ENCODE measurements at regions of chr22 and their contacts with region 1.

Region 1: DNA sequence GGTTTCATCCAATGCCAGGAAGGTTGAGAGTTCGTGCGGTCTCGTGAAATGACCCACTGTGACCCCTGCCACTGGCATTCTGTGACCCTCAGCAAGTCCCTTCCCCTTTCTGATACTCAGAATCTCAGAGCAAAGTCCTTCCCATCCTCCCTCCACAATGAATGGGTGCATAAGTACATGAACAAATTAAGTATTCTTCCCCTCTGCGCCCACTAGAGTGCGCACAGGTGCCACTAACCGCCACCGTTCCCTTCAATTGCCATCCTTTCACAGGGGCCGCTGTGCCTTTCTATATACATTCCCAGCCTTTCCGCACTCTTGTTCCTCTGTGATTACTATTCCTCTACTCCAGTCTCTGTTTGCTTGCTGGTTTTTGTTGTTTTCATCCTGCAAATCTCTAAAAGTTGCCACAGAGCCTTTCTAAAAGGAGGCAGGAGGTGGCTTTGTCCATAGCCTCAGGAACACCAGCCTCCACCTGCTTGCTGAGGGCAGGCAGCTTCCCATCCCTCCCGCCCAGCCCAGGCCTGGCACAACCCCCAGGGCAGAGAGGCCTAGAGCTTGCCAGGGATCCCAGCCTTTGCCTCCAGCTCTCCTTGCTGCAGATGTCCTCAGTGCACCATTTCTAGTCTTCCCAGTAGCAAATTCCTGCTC is 6.7 kb upstream of the AP1B1 start:
- DNase-seq: peak; percentile 44 to 85 (median 57)
- ATAC-seq: peak; percentile 100
- H3K4me3 ChIP-seq: no peak overlapping the region
- H3K4me3 Mint-ChIP-seq: peak overlapping the region; percentile 18
- H3K27ac ChIP-seq: no peak overlapping the region
- H3K27ac Mint-ChIP-seq: no peak overlapping the region
- H3K4me1 ChIP-seq: peaks cover 3% of the 10 kb centered on the region
- H3K4me1 Mint-ChIP-seq: peaks cover 10% of the 10 kb centered on the region
- H3K27me3 ChIP-seq: no peaks in the 10 kb centered on the region
- H3K27me3 Mint-ChIP-seq: no peaks in the 10 kb centered on the region
- CTCF ChIP-seq: peak; percentile 84

Region 2: DNA sequence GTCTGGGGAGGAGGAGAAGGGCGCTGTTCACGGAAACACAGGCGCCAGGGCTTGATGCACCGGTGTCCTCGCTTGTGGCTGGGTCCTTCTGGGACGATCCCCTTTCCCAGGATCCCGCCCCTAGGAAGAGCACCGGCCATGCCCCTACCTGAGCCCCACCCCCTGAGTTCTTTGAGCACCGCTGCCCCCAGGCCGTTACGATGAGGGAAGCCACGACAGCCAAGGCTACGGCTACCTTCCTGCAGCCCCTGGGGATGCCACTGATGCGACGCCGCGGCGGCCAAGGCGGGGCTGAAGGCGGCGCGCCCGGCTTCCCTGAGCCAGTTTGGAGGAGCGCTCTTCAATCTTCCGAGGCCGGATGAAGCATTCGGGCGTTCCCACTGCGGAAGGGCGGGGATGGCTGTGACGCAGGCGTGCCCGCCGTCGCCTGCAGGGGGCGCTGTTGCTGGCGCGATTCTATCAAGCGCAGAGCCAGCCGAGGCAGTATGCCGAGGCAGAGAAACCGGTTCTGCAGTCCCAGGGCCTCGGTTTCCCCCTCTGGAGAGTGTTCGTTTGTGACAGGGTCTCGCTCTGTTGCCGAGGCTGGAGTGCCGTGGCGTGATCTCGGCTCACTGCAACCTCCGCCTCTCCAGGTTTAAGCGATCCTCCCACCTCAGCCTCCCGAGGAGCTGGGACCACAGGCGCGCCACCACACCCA is 75.3 kb after region 1 on chr22:
- CTCF ChIA-PET with region 1: no interaction called
- POLR2A ChIA-PET with region 1: no interaction called
- intact Hi-C with region 1: loop called in 1 of 2 experiments (anchors 10 kb)
- DNase-seq: peak; percentile 55 to 81 (median 70)
- ATAC-seq: peak; percentile 99
- H3K4me3 ChIP-seq: peak overlapping the region; percentile 43
- H3K4me3 Mint-ChIP-seq: peak overlapping the region; percentile 77
- H3K27ac ChIP-seq: no peak overlapping the region
- H3K27ac Mint-ChIP-seq: no peak overlapping the region
- H3K4me1 ChIP-seq: peaks cover 10% of the 10 kb centered on the region
- H3K4me1 Mint-ChIP-seq: peaks cover 14% of the 10 kb centered on the region
- H3K27me3 ChIP-seq: peaks cover 0 to 4% of the 10 kb centered on the region in 2 experiments
- H3K27me3 Mint-ChIP-seq: peaks cover 27% of the 10 kb centered on the region
- CTCF ChIP-seq: peak; percentile 85

Region 3: DNA sequence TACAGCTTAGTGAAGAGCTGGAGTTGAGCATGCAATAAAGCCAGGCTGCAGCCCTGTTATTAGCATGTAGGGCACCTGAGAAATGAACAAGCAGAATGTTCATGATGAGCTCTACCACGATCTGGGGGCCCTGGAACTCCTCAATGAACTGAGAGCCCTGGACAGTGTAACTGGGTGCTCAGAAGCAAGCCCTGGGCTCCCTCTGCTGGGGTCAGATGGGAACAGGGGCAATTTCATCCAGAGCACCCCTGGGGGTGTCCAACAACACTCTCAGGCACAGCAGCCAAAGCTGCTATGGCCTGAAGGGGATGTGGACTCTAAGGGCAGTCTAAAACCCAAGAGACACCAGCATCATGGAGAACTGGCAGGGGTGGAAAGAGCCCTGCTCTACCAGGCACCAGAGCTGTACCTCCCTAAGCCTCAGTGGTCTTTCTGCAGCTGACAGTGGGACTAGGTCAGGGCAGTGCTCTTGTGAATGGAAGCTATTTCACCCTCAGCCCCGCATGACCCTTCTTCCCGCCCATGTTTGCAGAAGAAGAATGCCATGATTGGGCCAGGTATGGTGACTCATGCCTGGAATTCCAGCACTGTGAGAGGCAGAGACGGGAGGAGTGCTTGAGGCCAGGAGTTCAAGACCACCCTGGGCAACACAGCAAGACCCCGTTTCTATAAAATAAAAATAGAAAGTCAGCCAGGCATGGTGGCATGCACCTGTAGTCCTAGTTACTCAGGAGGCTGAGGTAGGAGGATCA is 129.6 kb after region 1 on chr22:
- CTCF ChIA-PET with region 1: interaction called, 4 read pairs
- POLR2A ChIA-PET with region 1: no interaction called
- intact Hi-C with region 1: loop called (anchors 1 to 5 kb)
- DNase-seq: peak in 11 of 14 experiments; percentile 2 to 38 (median 14)
- ATAC-seq: peak; percentile 57
- H3K4me3 ChIP-seq: no peak overlapping the region
- H3K4me3 Mint-ChIP-seq: no peak overlapping the region
- H3K27ac ChIP-seq: no peak overlapping the region
- H3K27ac Mint-ChIP-seq: no peak overlapping the region
- H3K4me1 ChIP-seq: peaks cover 2% of the 10 kb centered on the region
- H3K4me1 Mint-ChIP-seq: no peaks in the 10 kb centered on the region
- H3K27me3 ChIP-seq: no peaks in the 10 kb centered on the region
- H3K27me3 Mint-ChIP-seq: no peaks in the 10 kb centered on the region
- CTCF ChIP-seq: no peak

Region 4: GRCh38 chr22:29553351-29554224 is 158.5 kb after region 1 on chr22 and contains the start of gene THOC5:
- CTCF ChIA-PET with region 1: no interaction called
- POLR2A ChIA-PET with region 1: no interaction called
- intact Hi-C with region 1: no loop called
- DNase-seq: peak; percentile 80 to 93 (median 86)
- ATAC-seq: peak; percentile 93
- H3K4me3 ChIP-seq: peak within 1 kb of the TSS; percentile 83
- H3K4me3 Mint-ChIP-seq: peak within 1 kb of the TSS; percentile 95
- H3K27ac ChIP-seq: peak within 1 kb of the TSS; percentile 54 to 84
- H3K27ac Mint-ChIP-seq: peak within 1 kb of the TSS; percentile 94
- H3K4me1 ChIP-seq: peaks cover 22% of the 10 kb centered on the region
- H3K4me1 Mint-ChIP-seq: peaks cover 15% of the 10 kb centered on the region
- H3K27me3 ChIP-seq: no peaks in the 10 kb centered on the region
- H3K27me3 Mint-ChIP-seq: no peaks in the 10 kb centered on the region
- CTCF ChIP-seq: no peak
- total RNA-seq, gene THOC5: 27.1 to 32.9 TPM

Region 5: DNA sequence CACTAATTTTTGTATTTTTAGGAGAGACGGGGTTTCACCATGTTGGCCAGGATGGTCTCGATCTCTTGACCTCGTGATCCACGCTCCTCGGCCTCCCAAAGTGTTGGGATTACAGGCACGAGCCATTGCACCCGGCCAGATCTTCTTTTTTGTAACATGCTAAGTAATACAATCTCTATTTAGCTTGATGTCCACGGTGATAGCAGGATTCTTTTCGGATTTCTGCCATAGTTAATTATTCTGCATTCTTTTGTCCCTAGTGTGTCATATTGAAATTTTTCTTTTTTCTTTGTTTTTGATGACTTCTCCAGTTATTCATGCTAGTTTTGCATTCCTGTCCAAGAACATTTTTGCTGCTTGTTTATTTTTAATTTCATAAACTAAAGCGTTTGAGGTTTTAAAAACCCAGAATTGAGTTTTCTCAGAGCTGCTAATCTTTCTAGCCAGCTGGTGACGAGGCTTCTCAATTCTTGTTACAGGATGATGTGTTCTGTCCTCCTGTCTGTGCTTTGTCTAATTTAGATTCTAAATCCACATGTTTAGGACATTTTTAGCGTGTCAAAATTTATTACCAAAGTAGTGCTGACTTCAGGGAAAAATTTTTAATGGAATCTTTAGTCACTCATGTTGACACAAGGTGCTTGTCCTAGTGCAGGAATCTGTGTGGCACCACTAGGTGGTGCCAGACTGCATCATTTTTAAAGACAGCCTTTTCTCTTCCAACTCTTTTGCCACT is 230.2 kb after region 1 on chr22:
- CTCF ChIA-PET with region 1: no interaction called
- POLR2A ChIA-PET with region 1: no interaction called
- intact Hi-C with region 1: loop called in 1 of 2 experiments (anchors 10 kb)
- DNase-seq: peak in 8 of 14 experiments; percentile 9 to 73 (median 40)
- ATAC-seq: peak; percentile 51
- H3K4me3 ChIP-seq: no peak overlapping the region
- H3K4me3 Mint-ChIP-seq: no peak overlapping the region
- H3K27ac ChIP-seq: no peak overlapping the region
- H3K27ac Mint-ChIP-seq: peak overlapping the region; percentile 81
- H3K4me1 ChIP-seq: peaks cover 28% of the 10 kb centered on the region
- H3K4me1 Mint-ChIP-seq: peaks cover 76% of the 10 kb centered on the region
- H3K27me3 ChIP-seq: no peaks in the 10 kb centered on the region
- H3K27me3 Mint-ChIP-seq: no peaks in the 10 kb centered on the region
- CTCF ChIP-seq: peak; percentile 93

Region 6: DNA sequence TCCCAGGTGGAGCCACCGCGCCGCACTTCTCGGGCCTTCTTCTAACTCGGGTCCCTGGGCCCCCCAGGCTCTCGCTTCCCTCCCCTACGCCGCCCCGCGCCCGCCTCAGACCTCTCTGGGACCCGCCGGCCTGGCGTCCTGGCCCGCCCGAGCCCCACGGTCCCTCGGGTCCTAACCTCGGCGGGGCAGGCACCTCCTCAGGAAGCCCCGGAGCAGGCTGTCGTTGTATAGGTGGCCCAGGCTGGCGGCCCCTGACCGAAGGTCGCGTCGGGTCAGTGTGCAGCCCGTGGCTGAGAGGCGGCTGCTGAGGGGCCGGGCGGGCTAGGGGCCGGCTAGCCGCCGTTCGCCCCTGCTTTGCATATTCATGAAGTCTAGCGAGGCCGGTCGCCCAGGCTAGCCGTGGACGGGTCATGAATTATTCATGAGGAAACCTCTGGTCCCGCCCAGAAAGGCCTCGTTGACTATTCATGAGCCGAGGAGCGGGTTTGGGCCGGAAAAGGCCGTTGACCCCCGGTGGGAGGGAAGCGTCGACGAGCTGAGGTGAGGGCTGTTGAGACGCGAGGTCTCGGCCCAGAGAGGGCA is 685.0 kb after region 1 on chr22 and contains the start of gene HORMAD2:
- CTCF ChIA-PET with region 1: no interaction called
- POLR2A ChIA-PET with region 1: no interaction called
- intact Hi-C with region 1: loop called (anchors 5 to 10 kb)
- DNase-seq: peak in 1 of 14 experiments; percentile 13
- ATAC-seq: no peak
- H3K4me3 ChIP-seq: no peak within 1 kb of the TSS
- H3K4me3 Mint-ChIP-seq: no peak within 1 kb of the TSS
- H3K27ac ChIP-seq: no peak within 1 kb of the TSS
- H3K27ac Mint-ChIP-seq: no peak within 1 kb of the TSS
- H3K4me1 ChIP-seq: peaks cover 14% of the 10 kb centered on the region
- H3K4me1 Mint-ChIP-seq: peaks cover 17% of the 10 kb centered on the region
- H3K27me3 ChIP-seq: no peaks in the 10 kb centered on the region
- H3K27me3 Mint-ChIP-seq: no peaks in the 10 kb centered on the region
- CTCF ChIP-seq: no peak
- total RNA-seq, gene HORMAD2: not detected

Region 7: DNA sequence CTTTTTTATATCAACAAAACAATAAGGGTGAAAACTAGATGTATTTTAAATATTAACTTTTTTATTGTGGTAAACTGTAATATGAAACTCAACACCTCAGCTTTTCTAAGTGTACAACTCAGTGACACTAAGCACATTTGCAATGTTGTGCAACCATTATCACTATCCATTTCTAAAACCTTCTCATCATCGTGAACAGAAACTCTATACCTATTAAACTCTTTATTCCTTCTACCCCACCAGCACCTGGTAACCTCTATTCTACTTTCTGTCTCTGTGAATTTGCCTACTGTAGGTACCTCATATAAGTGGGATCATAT is 694.6 kb after region 1 on chr22:
- CTCF ChIA-PET with region 1: no interaction called
- POLR2A ChIA-PET with region 1: no interaction called
- intact Hi-C with region 1: loop called (anchors 5 to 10 kb)
- DNase-seq: no peak
- ATAC-seq: no peak
- H3K4me3 ChIP-seq: no peak overlapping the region
- H3K4me3 Mint-ChIP-seq: no peak overlapping the region
- H3K27ac ChIP-seq: no peak overlapping the region
- H3K27ac Mint-ChIP-seq: no peak overlapping the region
- H3K4me1 ChIP-seq: peaks cover 3% of the 10 kb centered on the region
- H3K4me1 Mint-ChIP-seq: peaks cover 8% of the 10 kb centered on the region
- H3K27me3 ChIP-seq: no peaks in the 10 kb centered on the region
- H3K27me3 Mint-ChIP-seq: no peaks in the 10 kb centered on the region
- CTCF ChIP-seq: no peak

Measured in CD4-positive, alpha-beta T cell (primary cell).